Testis (tissue), 5 donors: ENCODE measurements at regions of chr21 and their contacts with region 1.

Region 1: DNA sequence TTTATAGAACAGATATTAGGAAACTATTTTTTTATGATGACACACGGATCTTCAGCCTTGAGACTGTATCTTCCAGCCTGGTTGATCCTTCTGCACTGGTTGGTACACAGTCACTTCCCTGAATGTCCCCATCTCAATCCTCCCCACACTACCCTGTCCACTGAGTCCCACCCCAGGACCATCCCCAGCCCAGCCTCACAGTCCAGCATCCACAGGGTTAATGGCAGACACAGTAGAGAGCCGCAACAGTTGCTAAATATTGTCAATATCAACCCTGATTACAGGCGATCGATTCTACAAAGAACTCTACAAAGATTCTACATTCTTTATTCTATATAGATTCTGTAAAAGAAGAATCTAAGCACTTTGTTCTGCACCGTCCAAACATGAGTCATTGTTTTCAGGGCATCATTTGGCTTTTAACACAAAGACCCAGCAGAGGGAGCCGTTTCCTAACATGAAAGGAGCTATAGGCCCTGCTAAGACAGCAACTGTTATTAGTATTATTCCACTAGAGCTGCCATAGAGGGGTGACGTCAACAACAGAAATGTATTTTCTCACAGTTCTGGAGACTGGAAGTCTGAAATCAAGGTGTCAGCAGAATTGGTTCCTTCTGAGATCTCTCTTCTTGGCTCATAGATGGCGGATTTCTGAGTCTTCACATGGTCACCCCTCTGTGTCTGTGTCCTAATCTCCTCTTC is 30.1 kb upstream of the IFNAR2 start:
- DNase-seq: peak; percentile 93
- H3K4me3 ChIP-seq: no peak overlapping the region
- H3K27ac ChIP-seq: peak overlapping the region; percentile 58 to 71
- H3K4me1 ChIP-seq: peaks cover 46% of the 10 kb centered on the region
- H3K27me3 ChIP-seq: no peaks in the 10 kb centered on the region
- CTCF ChIP-seq: peak; percentile 62 to 84 (median 83)
- POLR2A ChIP-seq: no peak

Region 2: GRCh38 chr21:32826329-32827167 is 373.1 kb before region 1 on chr21:
- intact Hi-C with region 1: no loop called
- DNase-seq: peak; percentile 71
- H3K4me3 ChIP-seq: no peak overlapping the region
- H3K27ac ChIP-seq: no peak overlapping the region
- H3K4me1 ChIP-seq: no peaks in the 10 kb centered on the region
- H3K27me3 ChIP-seq: no peaks in the 10 kb centered on the region
- CTCF ChIP-seq: peak in 2 of 3 experiments; percentile 31 to 66
- POLR2A ChIP-seq: no peak

Region 3: GRCh38 chr21:33403779-33404585 is 204.3 kb after region 1 on chr21:
- intact Hi-C with region 1: no loop called
- DNase-seq: peak; percentile 66
- H3K4me3 ChIP-seq: peak overlapping the region; percentile 80 to 96
- H3K27ac ChIP-seq: peak overlapping the region; percentile 95 to 98
- H3K4me1 ChIP-seq: peaks cover 16% of the 10 kb centered on the region
- H3K27me3 ChIP-seq: no peaks in the 10 kb centered on the region
- CTCF ChIP-seq: no peak
- POLR2A ChIP-seq: no peak

Region 4: DNA sequence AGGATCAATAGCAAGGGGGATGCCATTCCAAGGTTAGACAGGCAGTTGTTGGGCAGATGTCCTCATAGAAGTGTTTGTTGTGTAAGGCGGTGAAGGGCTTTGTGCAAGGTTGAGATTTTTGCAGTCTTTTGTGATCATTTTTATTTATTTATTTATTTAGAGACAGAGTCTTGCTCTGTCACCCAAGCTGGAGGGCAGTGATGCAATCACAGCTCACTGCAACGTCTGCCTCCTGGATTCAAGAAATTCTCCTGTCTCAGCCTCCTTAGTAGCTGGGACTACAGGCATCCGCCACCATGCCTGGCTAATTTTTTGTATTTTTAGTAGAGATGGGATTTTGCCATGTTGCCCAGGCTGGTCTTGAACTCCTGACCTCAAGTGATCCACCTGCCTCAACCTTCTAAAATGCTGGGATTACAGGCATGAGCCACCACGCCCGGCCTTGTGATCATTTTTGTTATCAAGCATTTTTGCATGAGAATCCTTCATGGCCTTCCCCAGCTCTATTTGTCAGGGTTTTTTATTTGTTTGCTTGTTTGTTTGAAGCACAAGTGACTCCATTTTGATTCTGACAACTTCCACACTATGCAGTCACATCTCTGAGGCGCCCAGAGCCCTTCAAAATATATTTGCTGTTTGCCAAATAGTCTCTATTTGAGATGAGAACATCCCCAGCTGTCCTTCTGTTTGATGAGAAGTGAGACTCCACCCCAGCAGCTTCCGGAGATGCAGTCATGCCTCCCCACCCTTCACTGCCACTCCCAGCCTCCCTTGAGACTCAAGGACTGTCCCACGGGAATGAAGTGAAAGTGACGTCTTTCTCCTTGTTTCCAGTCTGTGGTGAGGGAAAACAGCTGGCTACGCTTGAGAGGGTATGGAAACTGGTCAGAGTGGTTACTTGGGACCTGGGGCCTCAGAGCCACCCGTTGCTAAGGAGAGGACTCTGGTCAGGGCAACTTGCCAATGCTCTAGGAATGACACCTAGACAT is 242.1 kb after region 1 on chr21:
- intact Hi-C with region 1: loop called (anchors 5 kb)
- DNase-seq: no peak
- H3K4me3 ChIP-seq: no peak overlapping the region
- H3K27ac ChIP-seq: no peak overlapping the region
- H3K4me1 ChIP-seq: peaks cover 4% of the 10 kb centered on the region
- H3K27me3 ChIP-seq: no peaks in the 10 kb centered on the region
- CTCF ChIP-seq: no peak
- POLR2A ChIP-seq: no peak